ENCODE measurements at regions of chrX and their contacts with region 1.

Region 1: GRCh38 chrX:12701628-12702027 is 89.6 kb upstream of the PRPS2 start:
- DNase-seq: peak; percentile 49 to 51
- H3K4me3 ChIP-seq: no peak overlapping the region
- H3K27ac ChIP-seq: no peak overlapping the region
- H3K4me1 ChIP-seq: no peaks in the 10 kb centered on the region
- H3K27me3 ChIP-seq: no peaks in the 10 kb centered on the region
- CTCF ChIP-seq: peak; percentile 79

Region 2: DNA sequence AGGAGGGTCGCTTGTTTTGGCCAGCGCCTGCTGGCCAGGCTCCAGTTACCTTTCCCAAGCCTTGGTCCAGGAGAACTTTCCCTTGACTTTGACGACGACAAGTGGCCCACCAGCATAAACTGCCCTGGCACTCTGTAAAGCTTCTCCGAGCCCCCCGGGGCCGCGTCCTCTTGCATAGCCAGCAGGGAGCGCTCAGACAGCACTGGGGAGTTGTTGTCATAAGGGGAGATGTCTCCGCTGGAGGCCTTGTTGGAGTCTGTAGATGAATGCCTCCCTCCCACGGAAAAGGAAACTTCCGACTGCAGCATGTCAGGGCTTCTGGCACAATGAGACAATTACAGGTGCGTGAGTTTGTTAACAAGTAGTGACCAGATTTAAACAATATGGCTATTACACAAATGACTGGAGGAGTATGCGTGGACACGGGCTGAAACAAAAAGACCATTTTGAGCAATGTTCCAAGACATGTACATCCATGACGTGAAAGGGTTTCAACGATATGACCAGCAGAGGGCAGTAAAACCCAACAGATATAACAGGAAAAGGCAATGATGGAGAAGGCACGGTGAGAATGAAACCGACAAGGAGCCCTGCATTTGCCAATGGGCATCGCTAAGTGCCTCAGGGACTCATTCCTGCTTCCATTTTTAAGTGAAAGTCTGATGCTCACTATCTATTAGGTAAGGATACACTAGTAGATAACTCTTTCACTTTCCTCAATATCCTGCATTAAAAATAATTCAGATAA is 1557.5 kb before region 1 on chrX:
- CTCF ChIA-PET with region 1: no interaction called
- POLR2A ChIA-PET with region 1: no interaction called
- intact Hi-C with region 1: loop called (anchors 10 kb)
- DNase-seq: peak; percentile 30 to 36
- H3K4me3 ChIP-seq: no peak overlapping the region
- H3K27ac ChIP-seq: no peak overlapping the region
- H3K4me1 ChIP-seq: no peaks in the 10 kb centered on the region
- H3K27me3 ChIP-seq: no peaks in the 10 kb centered on the region
- CTCF ChIP-seq: peak; percentile 66

Region 3: DNA sequence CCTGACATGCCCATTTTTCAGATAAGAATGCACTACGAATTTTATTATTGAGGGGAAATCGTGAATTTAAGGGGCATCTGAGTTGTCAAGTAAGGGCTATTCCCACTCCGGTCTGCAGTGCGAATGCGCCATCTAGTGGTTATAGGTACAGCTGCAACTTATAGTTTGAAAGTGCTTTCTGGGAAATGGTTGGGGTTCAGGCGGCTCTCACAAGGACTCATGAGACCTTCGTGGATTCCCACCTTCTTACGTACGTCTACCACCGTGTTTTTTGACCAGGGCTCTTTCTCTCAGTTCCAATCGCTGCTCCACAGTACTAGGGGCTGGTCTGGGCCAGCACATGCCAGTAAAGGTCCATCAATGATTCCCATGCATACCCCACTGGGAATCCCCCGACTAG is 931.3 kb before region 1 on chrX:
- CTCF ChIA-PET with region 1: no interaction called
- POLR2A ChIA-PET with region 1: no interaction called
- intact Hi-C with region 1: loop called (anchors 5 kb)
- DNase-seq: peak; percentile 18 to 44
- H3K4me3 ChIP-seq: no peak overlapping the region
- H3K27ac ChIP-seq: no peak overlapping the region
- H3K4me1 ChIP-seq: no peaks in the 10 kb centered on the region
- H3K27me3 ChIP-seq: no peaks in the 10 kb centered on the region
- CTCF ChIP-seq: peak; percentile 83

Region 4: DNA sequence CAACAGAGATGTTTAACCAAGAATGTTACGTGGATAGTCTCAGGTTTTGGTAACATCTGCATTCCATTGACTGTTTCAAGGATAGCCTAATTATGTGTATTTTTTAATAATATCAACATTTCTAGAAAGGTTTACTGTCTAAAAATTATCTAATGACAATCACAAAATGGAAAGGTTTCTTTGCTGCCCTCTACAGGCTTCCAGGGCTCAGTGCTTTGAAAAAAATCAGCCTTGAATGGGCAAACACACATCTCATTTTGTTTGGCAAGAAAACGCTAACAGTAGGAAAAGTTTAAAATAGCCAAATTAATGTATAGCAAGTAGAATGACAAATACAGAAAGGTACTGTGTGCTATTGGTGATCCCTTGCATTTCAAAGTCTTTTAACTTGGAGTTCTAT is 133.8 kb before region 1 on chrX:
- CTCF ChIA-PET with region 1: no interaction called
- POLR2A ChIA-PET with region 1: no interaction called
- intact Hi-C with region 1: loop called (anchors 10 kb)
- DNase-seq: no peak
- H3K4me3 ChIP-seq: no peak overlapping the region
- H3K27ac ChIP-seq: no peak overlapping the region
- H3K4me1 ChIP-seq: no peaks in the 10 kb centered on the region
- H3K27me3 ChIP-seq: no peaks in the 10 kb centered on the region
- CTCF ChIP-seq: peak; percentile 60

Region 5: DNA sequence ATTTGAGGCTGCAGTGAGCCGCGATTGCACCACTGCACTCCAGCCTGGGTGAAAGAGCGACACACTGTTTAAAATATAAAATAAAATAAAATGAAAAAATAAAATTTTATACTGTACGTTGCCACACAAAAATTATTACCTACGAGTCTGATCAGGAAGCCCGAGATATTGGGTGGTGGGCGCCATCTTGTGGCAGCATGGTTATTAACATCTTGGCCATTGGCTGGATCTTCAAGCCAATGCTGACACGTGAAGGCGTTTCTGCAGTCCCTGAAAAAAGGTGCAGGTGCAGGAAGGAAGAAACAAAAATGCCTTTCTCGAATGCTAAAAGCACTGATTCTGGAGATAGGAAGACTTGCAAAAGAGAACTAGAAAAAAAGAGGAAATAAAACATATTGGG is 199.9 kb after region 1 on chrX:
- CTCF ChIA-PET with region 1: no interaction called
- POLR2A ChIA-PET with region 1: no interaction called
- intact Hi-C with region 1: loop called (anchors 5 kb)
- DNase-seq: peak; percentile 52 to 57
- H3K4me3 ChIP-seq: no peak overlapping the region
- H3K27ac ChIP-seq: no peak overlapping the region
- H3K4me1 ChIP-seq: no peaks in the 10 kb centered on the region
- H3K27me3 ChIP-seq: no peaks in the 10 kb centered on the region
- CTCF ChIP-seq: peak; percentile 73

Measured in PC-9 (cell line).